Mucosa of descending colon (tissue), 3 donors: ENCODE measurements at regions of chr3 and their contacts with region 1.

Region 1: DNA sequence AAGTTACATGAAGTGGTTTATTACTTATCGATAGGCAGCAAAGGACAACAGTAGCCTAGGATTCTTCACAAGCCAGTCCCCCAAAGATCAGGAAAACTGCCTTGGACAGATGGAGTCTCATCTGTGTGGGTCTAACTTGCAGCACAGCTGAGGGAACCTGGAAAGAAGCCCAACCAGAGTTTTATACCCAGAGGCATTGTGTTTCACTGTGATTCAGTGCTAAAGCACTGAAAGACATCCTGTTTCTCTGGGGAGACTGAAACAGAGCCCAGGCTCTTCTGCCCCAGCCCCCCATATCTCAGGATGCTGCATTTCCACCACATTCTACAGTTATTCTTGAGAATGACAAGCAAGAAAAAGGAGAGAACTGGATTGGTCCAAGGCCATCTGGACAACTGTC is 48.2 kb upstream of the PYDC2 start:
- DNase-seq: no peak
- ATAC-seq: no peak
- H3K4me3 ChIP-seq: no peak overlapping the region
- H3K4me1 ChIP-seq: no peaks in the 10 kb centered on the region
- CTCF ChIP-seq: no peak

Region 2: DNA sequence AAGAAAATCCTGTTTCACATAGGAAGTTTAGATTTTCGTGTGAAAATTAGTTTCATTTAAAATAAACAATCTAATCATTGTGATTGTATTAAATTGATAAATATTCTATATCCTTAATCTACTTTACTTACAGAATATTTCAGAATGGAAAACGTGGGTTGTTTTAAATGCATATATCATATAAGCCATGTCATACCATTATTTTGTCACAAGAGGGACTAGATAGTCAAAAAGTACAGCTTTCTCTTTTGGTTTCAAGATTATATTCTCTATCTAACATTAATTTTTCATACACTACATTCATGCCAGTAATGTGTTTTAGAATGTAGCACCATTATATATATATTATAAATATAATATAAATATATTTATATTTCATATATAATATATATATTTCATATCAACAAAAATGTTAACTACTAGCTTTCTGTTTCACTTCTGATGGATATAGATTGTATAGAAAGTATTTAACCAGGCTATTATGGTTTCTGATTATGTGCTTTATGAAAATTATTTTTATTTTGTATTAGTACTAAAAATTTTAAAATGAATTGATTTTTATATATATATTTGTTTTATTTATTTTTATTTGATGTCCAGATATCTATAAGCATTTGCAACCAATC is 168.4 kb before region 1 on chr3:
- intact Hi-C with region 1: loop called in 1 of 2 experiments (anchors 10 kb)
- DNase-seq: no peak
- ATAC-seq: no peak
- H3K4me3 ChIP-seq: no peak overlapping the region
- H3K4me1 ChIP-seq: no peaks in the 10 kb centered on the region
- CTCF ChIP-seq: no peak

Region 3: DNA sequence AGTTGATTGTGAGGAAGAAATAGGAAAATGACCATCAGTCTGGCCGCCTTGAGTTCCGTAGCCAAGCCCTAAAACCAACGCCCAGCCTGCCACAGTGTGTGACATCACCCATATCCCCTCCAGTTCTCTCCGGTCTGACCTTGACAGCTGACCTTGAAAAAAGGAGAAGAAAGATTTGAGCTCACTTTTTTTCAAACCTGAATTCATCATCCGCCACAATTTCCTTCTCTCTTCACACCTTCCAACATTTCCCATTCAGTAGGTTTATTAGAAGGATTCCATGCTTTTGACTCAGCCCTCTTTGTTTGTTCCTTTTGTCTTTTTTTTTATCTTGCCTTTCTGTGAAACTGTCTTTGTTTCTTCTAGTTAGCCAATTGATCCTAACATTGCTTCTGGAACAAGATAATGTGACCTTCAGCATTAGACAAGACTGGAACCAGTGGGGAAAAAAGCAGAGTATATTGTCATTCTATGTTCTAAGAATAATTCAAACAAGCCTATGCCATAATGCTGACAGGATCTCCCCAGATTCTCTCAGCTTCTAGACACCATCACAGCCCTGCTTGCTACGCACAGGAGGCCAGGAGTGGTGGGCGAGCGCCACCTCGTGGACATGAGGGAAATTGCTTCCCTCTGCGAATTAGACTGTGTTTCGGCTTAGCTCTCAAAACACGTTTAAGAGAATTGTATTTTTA is 1031.5 kb after region 1 on chr3:
- intact Hi-C with region 1: loop called in 1 of 2 experiments (anchors 10 kb)
- DNase-seq: peak in 2 of 3 donors; percentile 58 to 59
- ATAC-seq: peak; percentile 86
- H3K4me3 ChIP-seq: no peak overlapping the region
- H3K4me1 ChIP-seq: no peaks in the 10 kb centered on the region
- CTCF ChIP-seq: peak; percentile 82